Mammary epithelial cell (primary cell): ENCODE measurements at regions of chr19 and their contacts with region 1.

Region 1: DNA sequence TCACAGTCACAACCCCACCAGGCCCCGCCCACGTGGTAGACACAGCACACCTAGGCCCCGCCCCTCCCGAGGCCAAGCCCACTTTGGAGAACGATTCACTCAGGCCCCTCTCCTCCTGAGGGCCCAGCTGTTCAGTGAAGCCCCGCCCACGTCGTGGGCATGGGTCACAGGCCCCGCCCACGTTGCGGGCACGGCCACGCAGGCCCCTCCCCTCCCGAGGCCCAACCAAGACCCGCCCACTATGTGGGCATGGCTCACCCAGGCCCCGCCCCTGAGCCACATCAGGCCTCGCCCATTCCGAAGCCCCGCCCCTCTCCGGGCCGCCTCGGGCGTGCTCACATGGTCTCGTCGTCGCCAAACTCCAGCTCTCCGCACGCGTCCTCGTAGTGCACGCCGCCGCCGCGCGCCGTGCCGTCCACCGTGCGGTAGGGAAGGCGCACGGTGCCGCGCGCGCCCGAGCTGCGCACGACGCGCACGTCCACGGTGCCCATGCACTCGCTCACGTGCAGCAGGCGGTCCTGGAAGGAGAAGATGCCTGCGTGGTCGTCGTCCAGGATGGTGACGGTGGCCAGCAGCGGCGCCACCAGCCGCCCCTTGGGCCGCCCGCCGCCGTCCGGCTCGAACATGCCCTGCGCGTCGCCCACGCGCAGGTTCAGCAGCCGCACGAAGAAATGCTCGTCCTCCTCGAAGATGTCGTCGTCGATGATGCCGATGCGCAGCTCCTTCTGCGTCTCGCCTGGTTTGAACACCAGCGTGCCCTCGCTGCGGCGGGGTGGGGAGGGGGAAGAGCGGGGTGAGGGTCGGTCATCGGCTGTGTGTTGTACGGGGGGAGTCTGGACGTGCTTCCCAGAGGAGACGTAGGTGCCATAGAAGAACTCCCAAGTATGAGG is 24.0 kb downstream of the SLC8A2 start:
- DNase-seq: peak; percentile 49
- H3K4me3 ChIP-seq: no peak overlapping the region
- H3K27ac ChIP-seq: no peak overlapping the region
- H3K4me1 ChIP-seq: peaks cover 5% of the 10 kb centered on the region
- H3K27me3 ChIP-seq: peaks cover 27% of the 10 kb centered on the region
- CTCF ChIP-seq: no peak

Region 2: GRCh38 chr19:47398707-47399597 is 48.8 kb before region 1 on chr19:
- CTCF ChIA-PET with region 1: no interaction called
- dilution Hi-C with region 1: loop called (anchors 5 kb)
- in situ Hi-C with region 1: no loop called
- intact Hi-C with region 1: no loop called
- DNase-seq: no peak
- H3K4me3 ChIP-seq: no peak overlapping the region
- H3K27ac ChIP-seq: no peak overlapping the region
- H3K4me1 ChIP-seq: no peaks in the 10 kb centered on the region
- H3K27me3 ChIP-seq: peaks cover 3% of the 10 kb centered on the region
- CTCF ChIP-seq: no peak

Region 3: GRCh38 chr19:47414469-47414868 is 33.2 kb before region 1 on chr19:
- CTCF ChIA-PET with region 1: no interaction called
- dilution Hi-C with region 1: no loop called
- in situ Hi-C with region 1: no loop called
- intact Hi-C with region 1: no loop called
- DNase-seq: no peak
- H3K4me3 ChIP-seq: no peak overlapping the region
- H3K27ac ChIP-seq: no peak overlapping the region
- H3K4me1 ChIP-seq: no peaks in the 10 kb centered on the region
- H3K27me3 ChIP-seq: peaks cover 24% of the 10 kb centered on the region
- CTCF ChIP-seq: peak in 1 of 2 donors; percentile 39

Region 4: DNA sequence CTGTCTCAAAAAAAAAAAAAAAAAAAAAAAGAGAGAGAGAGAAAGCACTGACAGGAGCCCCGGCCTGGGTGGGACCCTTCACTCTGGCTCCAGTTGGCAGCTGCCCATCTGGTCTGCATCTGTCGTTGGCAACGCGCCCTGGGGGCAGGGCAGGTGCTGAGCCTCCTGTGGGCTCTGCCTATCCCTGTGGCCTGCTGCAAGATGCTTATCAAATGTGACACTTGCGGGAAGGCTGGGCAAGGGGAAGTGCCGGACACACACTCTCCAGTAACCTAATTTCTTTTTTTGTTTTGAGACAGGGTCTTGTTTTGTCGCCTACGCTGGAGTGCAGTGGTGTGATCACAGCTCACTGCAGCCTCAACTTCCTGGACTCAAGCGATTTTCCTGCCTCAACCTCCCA is 47.0 kb after region 1 on chr19:
- CTCF ChIA-PET with region 1: no interaction called
- dilution Hi-C with region 1: loop called (anchors 5 kb)
- in situ Hi-C with region 1: no loop called
- intact Hi-C with region 1: no loop called
- DNase-seq: no peak
- H3K4me3 ChIP-seq: no peak overlapping the region
- H3K27ac ChIP-seq: no peak overlapping the region
- H3K4me1 ChIP-seq: no peaks in the 10 kb centered on the region
- H3K27me3 ChIP-seq: no peaks in the 10 kb centered on the region
- CTCF ChIP-seq: no peak

Region 5: GRCh38 chr19:47561440-47562057 is 113.8 kb after region 1 on chr19:
- CTCF ChIA-PET with region 1: no interaction called
- dilution Hi-C with region 1: loop called (anchors 5 kb)
- in situ Hi-C with region 1: no loop called
- intact Hi-C with region 1: no loop called
- DNase-seq: no peak
- H3K4me3 ChIP-seq: no peak overlapping the region
- H3K27ac ChIP-seq: no peak overlapping the region
- H3K4me1 ChIP-seq: peaks cover 3% of the 10 kb centered on the region
- H3K27me3 ChIP-seq: no peaks in the 10 kb centered on the region
- CTCF ChIP-seq: no peak

Region 6: GRCh38 chr19:47707135-47707925 is 259.6 kb after region 1 on chr19:
- CTCF ChIA-PET with region 1: interaction called, 3 read pairs
- dilution Hi-C with region 1: no loop called
- in situ Hi-C with region 1: loop called in 1 of 2 experiments (anchors 5 kb)
- intact Hi-C with region 1: no loop called
- DNase-seq: peak; percentile 68
- H3K4me3 ChIP-seq: no peak overlapping the region
- H3K27ac ChIP-seq: no peak overlapping the region
- H3K4me1 ChIP-seq: no peaks in the 10 kb centered on the region
- H3K27me3 ChIP-seq: no peaks in the 10 kb centered on the region
- CTCF ChIP-seq: peak; percentile 94 to 95